ENCODE measurements at regions of chrX and their contacts with region 1.

Region 1: GRCh38 chrX:9341291-9342201 is 123.3 kb upstream of the TBL1X start:
- DNase-seq: peak; percentile 69
- ATAC-seq: peak; percentile 19
- H3K4me3 ChIP-seq: peak overlapping the region; percentile 9; the same call in 1 of the 2 replicates
- H3K27ac ChIP-seq: peak overlapping the region; percentile 97
- H3K4me1 ChIP-seq: peaks cover 10% of the 10 kb centered on the region
- H3K27me3 ChIP-seq: no peaks in the 10 kb centered on the region
- CTCF ChIP-seq: no peak
- POLR2A ChIP-seq: no peak
- RAD21 ChIP-seq: 0 out of 2 replicates have a peak, but pooled peaks have one; percentile 2

Region 2: DNA sequence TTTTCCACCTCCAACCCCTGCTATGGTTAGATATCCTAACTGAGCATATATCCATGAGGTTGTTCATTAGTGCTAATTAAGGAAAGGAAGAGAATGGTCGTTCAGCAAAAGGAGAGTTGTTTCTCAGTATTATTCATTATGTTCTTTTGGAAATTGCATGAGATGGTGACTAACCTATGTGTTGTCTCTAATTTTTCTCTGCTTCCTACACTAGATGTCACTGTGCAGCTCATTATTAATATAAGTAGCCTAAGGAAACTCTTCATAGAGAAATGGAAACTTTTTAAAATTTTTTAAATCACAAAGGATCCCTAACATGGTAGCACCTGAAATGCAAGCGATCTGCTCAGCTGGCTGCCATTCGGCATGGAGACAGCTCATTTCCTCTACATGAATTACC is 472.6 kb before region 1 on chrX:
- CTCF ChIA-PET with region 1: no interaction called
- POLR2A ChIA-PET with region 1: no interaction called
- dilution Hi-C with region 1: no loop called
- in situ Hi-C with region 1: no loop called
- intact Hi-C with region 1: loop called (anchors 10 kb)
- DNase-seq: peak; percentile 46
- ATAC-seq: peak; percentile 74
- H3K4me3 ChIP-seq: no peak overlapping the region
- H3K27ac ChIP-seq: peak overlapping the region; percentile 81
- H3K4me1 ChIP-seq: peaks cover 6% of the 10 kb centered on the region
- H3K27me3 ChIP-seq: no peaks in the 10 kb centered on the region
- CTCF ChIP-seq: peak; percentile 48
- POLR2A ChIP-seq: no peak
- RAD21 ChIP-seq: peak; percentile 17

Region 3: DNA sequence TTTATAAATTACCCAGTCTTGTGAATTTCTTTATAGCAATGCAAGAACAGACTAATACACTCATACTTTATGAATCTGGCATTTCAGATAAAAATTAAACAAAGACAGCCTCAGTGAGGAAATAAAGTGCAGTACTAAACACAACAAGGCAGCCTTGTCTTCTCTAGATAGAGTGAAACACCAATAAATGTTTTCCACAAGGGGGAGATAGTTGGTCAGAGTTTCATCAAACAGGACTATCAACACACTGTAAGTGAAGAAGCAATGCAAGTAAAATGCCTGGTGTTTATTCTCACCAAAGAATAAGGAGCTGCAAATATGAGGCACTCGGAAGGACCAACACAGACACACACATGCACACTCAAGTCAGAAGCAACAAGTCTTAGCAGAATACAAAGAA is 370.4 kb before region 1 on chrX:
- CTCF ChIA-PET with region 1: no interaction called
- POLR2A ChIA-PET with region 1: interaction called, 3 read pairs
- dilution Hi-C with region 1: no loop called
- in situ Hi-C with region 1: no loop called
- intact Hi-C with region 1: loop called (anchors 1 kb)
- DNase-seq: peak; percentile 67
- ATAC-seq: peak; percentile 92
- H3K4me3 ChIP-seq: no peak overlapping the region
- H3K27ac ChIP-seq: no peak overlapping the region
- H3K4me1 ChIP-seq: no peaks in the 10 kb centered on the region
- H3K27me3 ChIP-seq: no peaks in the 10 kb centered on the region
- CTCF ChIP-seq: peak; percentile 51
- POLR2A ChIP-seq: no peak
- RAD21 ChIP-seq: peak; percentile 69

Region 4: DNA sequence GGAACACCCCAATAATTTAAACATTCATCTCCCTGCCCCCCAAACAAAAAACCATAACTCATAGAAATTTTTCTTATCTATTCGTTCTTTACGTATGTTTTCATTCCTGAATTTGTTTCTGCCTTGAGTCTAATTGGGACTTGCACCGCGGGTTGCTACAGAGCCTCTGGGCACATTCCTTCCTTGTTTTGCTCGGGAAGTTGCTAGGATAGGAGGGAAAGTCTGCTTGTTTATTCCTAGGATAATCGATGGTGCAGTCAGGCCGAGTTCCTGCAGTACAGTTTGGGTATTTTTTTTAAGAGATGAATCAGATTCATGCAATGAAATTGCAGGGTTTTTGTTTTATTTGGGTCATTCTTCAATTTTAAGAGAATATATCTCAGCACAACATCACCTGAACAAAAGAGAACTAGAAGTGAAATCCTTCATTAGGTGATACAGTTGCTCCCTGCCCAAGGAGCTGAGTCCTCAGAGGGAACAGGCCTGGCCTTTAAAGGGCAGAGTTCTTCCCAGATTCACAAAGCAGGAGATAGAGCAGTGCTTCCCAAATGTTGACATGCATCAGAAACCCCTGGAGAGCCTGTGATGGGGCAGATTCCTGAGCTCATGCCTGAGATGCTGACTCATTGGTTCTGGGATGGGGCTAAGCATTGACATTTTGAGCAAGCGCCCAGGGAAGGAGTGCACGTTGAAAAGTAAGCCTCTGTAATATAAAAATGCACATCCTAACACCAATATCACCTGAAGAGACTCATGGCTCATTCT is 192.7 kb before region 1 on chrX:
- CTCF ChIA-PET with region 1: no interaction called
- POLR2A ChIA-PET with region 1: no interaction called
- dilution Hi-C with region 1: no loop called
- in situ Hi-C with region 1: no loop called
- intact Hi-C with region 1: loop called (anchors 2 kb)
- DNase-seq: peak; percentile 71
- ATAC-seq: peak; percentile 91
- H3K4me3 ChIP-seq: no peak overlapping the region
- H3K27ac ChIP-seq: peak overlapping the region; percentile 96
- H3K4me1 ChIP-seq: peaks cover 11% of the 10 kb centered on the region
- H3K27me3 ChIP-seq: no peaks in the 10 kb centered on the region
- CTCF ChIP-seq: no peak
- POLR2A ChIP-seq: no peak
- RAD21 ChIP-seq: no peak